Activated CD8-positive, alpha-beta T cell treated with anti-CD3 and anti-CD28 coated beads, Interleukin-2, amount 10 ng/mL, durations not matched to agents 7 days and 5 days (primary cell): ENCODE measurements at regions of chr2 and their contacts with region 1.

Region 1: DNA sequence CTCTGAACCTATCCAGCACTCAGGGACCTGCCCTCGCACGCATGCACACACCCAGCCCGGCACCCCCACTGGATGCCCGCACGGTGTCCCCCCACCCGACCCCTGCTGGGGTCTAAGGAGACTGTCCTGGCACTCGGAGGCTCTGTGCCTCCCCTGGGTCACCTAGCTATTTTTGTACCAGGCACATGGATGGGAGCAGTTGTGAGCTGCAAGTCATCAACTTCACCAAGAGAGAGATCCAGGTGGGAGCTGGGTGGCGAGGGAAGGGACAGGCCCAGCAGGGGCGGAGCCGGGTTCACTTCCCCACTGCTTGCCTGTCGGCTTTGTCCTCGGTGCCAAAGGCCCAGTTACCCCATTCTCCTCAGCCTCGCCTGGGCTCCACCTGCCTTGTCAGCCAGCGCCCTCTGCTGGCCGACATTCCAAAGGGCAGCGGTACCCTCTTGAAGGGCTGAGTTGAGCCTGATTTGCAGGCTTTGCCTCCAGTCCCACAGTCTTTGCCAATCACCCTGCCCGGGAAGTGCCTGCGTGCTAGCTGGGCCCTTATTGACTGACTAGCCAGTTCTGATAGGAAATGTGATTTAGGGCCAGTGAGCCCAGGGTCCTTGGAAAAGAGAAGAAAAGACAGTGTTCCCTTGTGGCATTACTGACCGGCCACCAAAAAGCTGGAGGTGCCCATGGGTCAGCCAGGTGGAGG is 5.8 kb downstream of the NT5DC4 start:
- DNase-seq: peak; percentile 92
- ATAC-seq: peak; percentile 98
- H3K4me3 Mint-ChIP-seq: no peak overlapping the region
- H3K27ac Mint-ChIP-seq: peak overlapping the region; percentile 54
- H3K4me1 Mint-ChIP-seq: peaks cover 12% of the 10 kb centered on the region
- H3K27me3 Mint-ChIP-seq: peaks cover 12% of the 10 kb centered on the region

Region 2: DNA sequence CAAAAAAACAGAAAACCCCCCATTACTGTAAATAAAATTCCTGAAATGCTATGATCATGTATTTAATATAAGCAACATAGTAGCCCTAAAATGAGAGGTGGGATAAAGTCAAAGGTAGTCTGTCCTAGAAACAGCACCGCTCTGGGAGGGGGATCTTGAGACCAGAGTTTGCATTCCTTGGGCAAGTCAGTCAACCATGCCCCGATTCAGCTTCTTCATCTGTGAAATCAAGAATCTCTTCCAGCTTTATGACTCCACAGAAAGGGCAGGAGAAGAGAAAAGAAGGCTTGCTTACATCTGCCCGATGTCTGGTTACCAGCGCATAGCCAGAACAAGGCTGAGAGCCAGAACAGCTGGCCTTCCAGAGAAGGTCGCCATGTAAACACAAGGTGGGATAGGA is 590.5 kb before region 1 on chr2:
- CTCF ChIA-PET with region 1: no interaction called
- POLR2A ChIA-PET with region 1: no interaction called
- DNase-seq: no peak
- ATAC-seq: no peak
- H3K4me3 Mint-ChIP-seq: no peak overlapping the region
- H3K27ac Mint-ChIP-seq: no peak overlapping the region
- H3K4me1 Mint-ChIP-seq: peaks cover 13% of the 10 kb centered on the region
- H3K27me3 Mint-ChIP-seq: peaks cover 39% of the 10 kb centered on the region

Region 3: DNA sequence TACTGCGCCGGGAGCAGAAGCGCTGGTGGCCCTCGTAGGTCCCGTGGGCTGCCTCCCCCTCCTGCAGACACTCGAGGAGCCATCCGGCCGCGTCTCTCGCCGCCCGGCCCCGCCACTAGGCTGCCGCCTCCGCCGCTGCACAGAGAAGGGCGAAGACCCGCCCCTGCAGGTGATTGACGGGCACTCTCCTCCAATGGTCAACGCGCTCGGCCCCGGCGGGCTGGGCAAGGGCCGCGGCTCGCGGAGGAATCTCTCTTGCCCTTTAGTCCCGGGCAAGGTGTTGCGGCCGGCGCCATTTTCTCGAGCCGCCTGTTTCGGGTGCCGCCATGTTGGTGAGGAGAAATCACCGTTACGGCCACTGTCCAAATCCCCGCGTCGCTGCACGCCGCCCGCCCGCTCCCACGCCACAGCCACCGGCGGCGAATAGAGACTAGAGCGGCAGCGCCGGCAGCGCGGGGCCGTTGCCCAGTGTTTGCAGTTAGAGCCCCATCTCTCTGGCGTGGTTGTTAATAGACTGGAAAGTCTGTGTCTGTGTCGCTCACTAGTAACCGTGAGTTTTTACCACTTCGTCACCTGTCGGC is 451.2 kb before region 1 on chr2 and contains the start of gene ZC3H6:
- CTCF ChIA-PET with region 1: no interaction called
- POLR2A ChIA-PET with region 1: no interaction called
- DNase-seq: peak; percentile 99
- ATAC-seq: peak; percentile 96
- H3K4me3 Mint-ChIP-seq: peak within 1 kb of the TSS; percentile 94
- H3K27ac Mint-ChIP-seq: peak within 1 kb of the TSS; percentile 99
- H3K4me1 Mint-ChIP-seq: peaks cover 15% of the 10 kb centered on the region
- H3K27me3 Mint-ChIP-seq: no peaks in the 10 kb centered on the region
- total RNA-seq, gene ZC3H6: 8.4 to 9.0 TPM

Region 4: DNA sequence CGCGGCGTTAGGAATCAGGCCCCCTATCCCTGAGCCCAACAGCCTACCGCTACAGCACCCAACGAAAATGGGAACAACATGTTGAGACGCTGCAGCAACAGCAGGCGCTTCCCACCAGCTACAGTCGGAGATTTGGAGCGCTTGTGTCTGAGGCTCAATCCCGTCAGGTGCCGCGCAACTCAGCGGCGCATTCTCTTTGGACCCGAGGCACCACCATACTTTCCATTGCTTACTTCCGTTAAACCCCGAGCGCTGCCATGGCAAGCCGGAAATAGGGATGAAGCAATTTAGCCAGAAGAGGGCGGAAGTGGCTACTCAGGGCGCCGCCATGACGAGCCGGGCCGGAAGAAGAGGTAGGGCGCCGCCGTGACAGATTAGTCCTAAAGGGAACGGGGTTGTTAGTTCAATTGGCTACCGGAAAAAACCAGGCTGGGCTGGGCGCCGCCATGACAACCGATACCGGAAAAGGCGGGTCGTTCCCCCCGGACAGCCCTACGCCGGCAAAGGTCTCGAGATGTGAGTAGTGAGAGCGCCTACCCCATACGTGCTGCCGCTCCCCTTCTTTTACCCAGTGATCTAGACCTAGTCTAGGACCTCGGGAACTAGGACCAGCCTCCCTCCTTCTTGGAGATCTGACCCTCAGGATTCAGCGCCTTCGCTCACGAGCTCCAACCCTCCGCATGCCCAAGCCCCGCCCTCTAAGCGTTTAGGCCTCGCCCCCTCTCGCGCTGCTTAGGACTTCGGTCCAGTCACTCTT is 142.3 kb before region 1 on chr2 and contains the start of gene CHCHD5:
- CTCF ChIA-PET with region 1: interaction called, 18 read pairs
- POLR2A ChIA-PET with region 1: interaction called, 3 read pairs
- DNase-seq: peak; percentile 98
- ATAC-seq: peak; percentile 92
- H3K4me3 Mint-ChIP-seq: peak within 1 kb of the TSS; percentile 95
- H3K27ac Mint-ChIP-seq: peak within 1 kb of the TSS; percentile 99
- H3K4me1 Mint-ChIP-seq: peaks cover 29% of the 10 kb centered on the region
- H3K27me3 Mint-ChIP-seq: no peaks in the 10 kb centered on the region
- total RNA-seq, gene CHCHD5: 32.4 to 35.4 TPM

Region 5: GRCh38 chr2:112614201-112614840 is 112.3 kb before region 1 on chr2:
- CTCF ChIA-PET with region 1: interaction called, 10 read pairs
- POLR2A ChIA-PET with region 1: no interaction called
- DNase-seq: no peak
- ATAC-seq: no peak
- H3K4me3 Mint-ChIP-seq: no peak overlapping the region
- H3K27ac Mint-ChIP-seq: no peak overlapping the region
- H3K4me1 Mint-ChIP-seq: no peaks in the 10 kb centered on the region
- H3K27me3 Mint-ChIP-seq: peaks cover 31% of the 10 kb centered on the region

Region 6: GRCh38 chr2:112645310-112646101 is 81.1 kb before region 1 on chr2 and contains the start of gene SLC20A1:
- CTCF ChIA-PET with region 1: interaction called, 28 read pairs
- POLR2A ChIA-PET with region 1: interaction called, 4 read pairs
- DNase-seq: peak; percentile 97
- ATAC-seq: peak; percentile 94
- H3K4me3 Mint-ChIP-seq: peak within 1 kb of the TSS; percentile 92
- H3K27ac Mint-ChIP-seq: peak within 1 kb of the TSS; percentile 90
- H3K4me1 Mint-ChIP-seq: peaks cover 65% of the 10 kb centered on the region
- H3K27me3 Mint-ChIP-seq: peaks cover 3% of the 10 kb centered on the region
- total RNA-seq, gene SLC20A1: 115 to 120 TPM

Region 7: DNA sequence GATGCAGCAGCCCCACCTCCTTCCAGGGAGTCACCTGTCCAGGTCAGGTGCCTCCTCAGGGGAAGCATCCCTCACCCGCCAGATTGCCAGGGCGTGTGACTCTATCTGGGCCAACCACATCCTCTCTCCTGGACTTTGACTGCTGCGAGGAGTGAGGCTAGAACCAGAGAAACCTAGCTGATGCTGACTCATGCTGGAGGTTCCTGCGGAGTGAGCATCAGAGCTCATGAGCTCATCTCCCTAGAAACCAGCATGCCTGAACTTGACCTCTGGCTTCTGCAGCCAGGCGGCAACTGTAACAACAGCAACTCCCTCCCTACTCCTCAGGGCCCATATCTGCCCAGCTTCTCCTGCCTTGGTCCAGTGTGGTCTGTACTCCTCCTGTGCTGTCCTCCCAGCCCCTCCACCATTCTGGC is 34.1 kb before region 1 on chr2:
- CTCF ChIA-PET with region 1: interaction called, 50 read pairs
- POLR2A ChIA-PET with region 1: no interaction called
- DNase-seq: peak; percentile 83
- ATAC-seq: peak; percentile 94
- H3K4me3 Mint-ChIP-seq: no peak overlapping the region
- H3K27ac Mint-ChIP-seq: peak overlapping the region; percentile 83
- H3K4me1 Mint-ChIP-seq: peaks cover 37% of the 10 kb centered on the region
- H3K27me3 Mint-ChIP-seq: peaks cover 16% of the 10 kb centered on the region

Region 8: DNA sequence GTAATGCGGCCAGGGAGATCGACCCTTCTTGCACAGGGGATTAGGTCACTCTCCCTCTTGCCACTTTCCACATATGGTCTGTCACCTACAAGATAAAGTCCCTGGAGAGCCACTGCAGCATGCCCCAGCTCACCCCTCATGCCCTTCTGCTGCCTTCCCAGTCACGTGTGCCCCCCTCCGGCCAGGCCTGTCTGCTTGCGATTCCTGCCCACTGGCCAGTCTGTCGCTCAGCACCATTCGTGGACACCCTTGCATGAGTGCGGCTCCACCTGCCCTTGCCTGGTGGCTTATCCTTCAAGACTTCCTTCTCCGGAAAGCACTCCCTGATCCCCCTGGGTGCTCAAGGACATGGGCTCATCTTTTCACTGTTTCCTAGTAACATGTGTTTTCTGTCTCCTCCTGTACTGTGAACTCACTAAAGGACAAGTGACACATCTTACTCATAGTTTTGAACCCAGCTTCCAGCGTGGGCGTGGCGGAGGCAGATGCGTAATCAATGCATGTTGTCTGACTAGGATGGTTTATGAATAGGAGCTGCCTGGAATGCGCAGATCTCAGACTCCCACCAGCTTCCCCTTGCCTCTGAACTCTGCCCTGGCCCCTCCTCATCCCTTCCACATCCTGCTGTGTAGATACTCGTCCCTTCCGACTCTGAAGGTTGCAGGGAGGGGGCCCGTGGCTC is 13.6 kb before region 1 on chr2:
- CTCF ChIA-PET with region 1: interaction called, 49 read pairs
- POLR2A ChIA-PET with region 1: interaction called, 3 read pairs
- DNase-seq: no peak
- ATAC-seq: no peak
- H3K4me3 Mint-ChIP-seq: no peak overlapping the region
- H3K27ac Mint-ChIP-seq: no peak overlapping the region
- H3K4me1 Mint-ChIP-seq: peaks cover 10% of the 10 kb centered on the region
- H3K27me3 Mint-ChIP-seq: peaks cover 40% of the 10 kb centered on the region

Region 9: DNA sequence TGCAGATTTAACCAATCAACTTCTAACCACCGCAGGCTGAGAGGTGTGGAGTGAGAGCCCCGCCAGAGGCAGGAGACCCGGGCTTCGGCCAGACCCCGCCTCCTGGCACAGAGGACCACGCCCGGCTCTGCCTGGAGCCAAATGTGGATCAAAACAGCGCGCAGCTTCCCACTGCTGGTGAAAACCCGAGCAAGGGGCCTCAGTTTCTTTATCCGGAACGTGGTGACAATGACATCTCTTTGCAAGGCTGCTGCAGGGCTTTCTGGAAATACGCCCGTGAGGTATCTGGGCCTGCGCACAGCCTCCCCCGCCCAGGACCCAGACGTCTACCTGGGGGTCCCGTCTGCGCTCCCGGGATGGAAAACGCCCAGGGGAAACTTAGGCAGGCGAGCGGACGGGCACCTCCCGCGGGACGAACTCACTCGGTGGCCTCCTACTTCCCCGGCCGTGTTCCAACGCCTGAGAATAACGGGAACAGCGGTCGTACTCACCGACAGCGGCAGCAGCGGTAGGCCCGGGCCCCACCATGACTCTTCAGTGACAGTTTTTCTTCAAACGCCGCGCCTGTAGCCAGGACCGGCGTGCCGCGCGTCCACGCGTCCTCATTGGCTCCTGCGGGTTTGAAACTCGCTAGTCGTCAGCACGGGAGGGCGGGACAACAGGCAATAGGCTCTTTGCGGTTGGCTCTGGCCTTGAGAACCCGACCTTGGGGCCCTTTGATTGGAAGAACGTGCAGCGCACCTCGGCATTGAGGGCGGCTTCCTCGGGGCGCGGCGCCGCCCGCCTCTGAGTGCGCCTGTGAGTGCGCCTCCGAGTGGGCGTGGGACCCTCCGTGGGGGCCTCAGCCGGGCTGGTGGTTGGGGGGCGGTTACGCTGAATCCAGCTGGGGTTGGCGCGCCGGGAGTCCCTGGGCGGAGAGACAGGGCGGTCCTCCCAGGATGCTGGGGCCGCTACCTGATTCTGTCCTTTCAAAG is 37.7 kb after region 1 on chr2 and contains the start of gene CKAP2L:
- CTCF ChIA-PET with region 1: no interaction called
- POLR2A ChIA-PET with region 1: no interaction called
- DNase-seq: peak; percentile 99
- ATAC-seq: peak; percentile 98
- H3K4me3 Mint-ChIP-seq: peak within 1 kb of the TSS; percentile 99
- H3K27ac Mint-ChIP-seq: peak within 1 kb of the TSS; percentile 98
- H3K4me1 Mint-ChIP-seq: peaks cover 52% of the 10 kb centered on the region
- H3K27me3 Mint-ChIP-seq: no peaks in the 10 kb centered on the region
- total RNA-seq, gene CKAP2L: 59.3 to 63.4 TPM

Region 10: DNA sequence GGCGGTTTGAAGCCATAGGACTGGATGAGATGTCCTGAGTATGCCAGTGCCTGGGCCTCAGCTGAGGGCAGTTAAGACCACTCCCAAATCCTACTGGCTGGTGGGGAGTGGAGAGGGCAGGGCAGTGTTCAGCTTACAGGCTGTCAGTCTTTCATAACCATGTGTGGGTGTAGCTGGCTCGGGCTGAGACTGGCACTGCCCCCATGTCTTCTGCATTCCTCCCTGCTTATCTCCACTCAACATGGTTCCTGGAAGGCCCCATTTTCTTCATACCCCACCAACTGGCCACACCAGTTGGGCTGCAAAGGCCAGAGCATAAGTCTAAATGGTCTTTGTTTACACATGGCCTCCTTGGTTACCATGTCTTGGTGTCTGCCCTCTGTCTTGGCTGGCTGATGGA is 167.1 kb after region 1 on chr2:
- CTCF ChIA-PET with region 1: no interaction called
- POLR2A ChIA-PET with region 1: no interaction called
- DNase-seq: no peak
- ATAC-seq: no peak
- H3K4me3 Mint-ChIP-seq: no peak overlapping the region
- H3K27ac Mint-ChIP-seq: no peak overlapping the region
- H3K4me1 Mint-ChIP-seq: no peaks in the 10 kb centered on the region
- H3K27me3 Mint-ChIP-seq: peaks cover 10% of the 10 kb centered on the region

Region 11: DNA sequence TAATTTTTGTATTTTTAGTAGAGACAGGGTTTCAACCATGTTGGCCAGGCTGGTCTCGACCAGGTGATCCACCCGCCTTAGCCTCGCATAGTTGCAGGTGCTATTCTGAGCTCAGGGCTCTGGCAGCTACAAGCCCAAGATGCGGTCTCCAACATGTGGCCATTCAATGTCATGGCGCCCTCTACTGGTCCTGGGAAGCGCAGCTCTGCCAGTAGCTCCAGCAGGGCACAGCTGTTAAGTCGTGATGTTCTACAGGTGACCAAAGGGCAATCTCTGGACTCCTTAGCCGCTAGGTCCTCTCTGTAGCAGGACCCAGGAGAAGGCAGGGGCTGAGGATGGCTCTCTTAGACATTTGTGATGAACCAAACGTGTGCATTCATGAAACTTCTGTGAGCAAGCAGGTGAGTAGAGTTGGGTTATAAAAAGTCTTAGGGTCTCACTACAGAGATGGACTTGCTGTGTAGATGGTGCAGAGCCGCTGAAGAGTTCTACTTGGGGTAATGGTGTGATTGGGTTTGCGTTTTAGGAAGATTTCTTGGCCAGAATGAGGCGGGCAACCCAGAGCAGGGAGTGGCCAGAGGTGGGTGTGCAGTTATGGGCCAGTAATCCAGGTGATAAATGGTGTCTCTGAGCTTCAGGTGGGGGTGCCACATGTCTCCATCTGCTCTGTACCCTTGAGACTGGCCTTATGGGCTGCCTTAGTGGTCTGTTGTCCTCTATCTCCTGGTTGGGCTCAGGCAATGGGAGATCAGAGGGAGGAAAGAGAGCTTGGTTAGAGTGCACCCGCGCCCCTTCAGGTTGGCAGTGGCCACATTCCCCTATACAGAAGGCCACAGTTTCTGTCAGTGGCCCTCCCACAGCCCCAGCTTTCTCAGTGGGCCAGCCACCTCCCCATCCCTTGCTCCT is 215.4 kb after region 1 on chr2:
- CTCF ChIA-PET with region 1: interaction called, 23 read pairs
- POLR2A ChIA-PET with region 1: no interaction called
- DNase-seq: peak; percentile 85
- ATAC-seq: peak; percentile 96
- H3K4me3 Mint-ChIP-seq: no peak overlapping the region
- H3K27ac Mint-ChIP-seq: no peak overlapping the region
- H3K4me1 Mint-ChIP-seq: peaks cover 6% of the 10 kb centered on the region
- H3K27me3 Mint-ChIP-seq: peaks cover 10% of the 10 kb centered on the region